Sigmoid colon (tissue), 7 donors: ENCODE measurements at regions of chr17 and their contacts with region 1.

Region 1: GRCh38 chr17:49677933-49678847 is at the start of gene SPOP:
- DNase-seq: peak; percentile 100
- H3K4me3 ChIP-seq: peak within 1 kb of the TSS; percentile 68 to 77 (median 74)
- H3K27ac ChIP-seq: peak within 1 kb of the TSS; percentile 96 to 99 (median 98)
- H3K4me1 ChIP-seq: peaks cover 0 to 41% (median 31%) of the 10 kb centered on the region in 4 donors
- H3K27me3 ChIP-seq: no peaks in the 10 kb centered on the region
- CTCF ChIP-seq: no peak
- EP300 ChIP-seq: peak in 1 of 4 donors; percentile 26
- POLR2A ChIP-seq: peak; percentile 5 to 16
- total RNA-seq, gene SPOP: 226 to 332 (median 280) TPM

Region 2: GRCh38 chr17:49575579-49576087 is 102.6 kb before region 1 on chr17 and contains the start of gene NXPH3:
- intact Hi-C with region 1: loop called (anchors 5 kb)
- DNase-seq: peak; percentile 89
- H3K4me3 ChIP-seq: peak within 1 kb of the TSS; percentile 81 to 85 (median 84)
- H3K27ac ChIP-seq: peak within 1 kb of the TSS; percentile 85 to 96 (median 90)
- H3K4me1 ChIP-seq: peaks cover 0 to 53% (median 49%) of the 10 kb centered on the region in 4 donors
- H3K27me3 ChIP-seq: no peaks in the 10 kb centered on the region
- CTCF ChIP-seq: peak in 1 of 4 experiments; percentile 62
- EP300 ChIP-seq: no peak
- POLR2A ChIP-seq: no peak
- total RNA-seq, gene NXPH3: 20.2 to 32.6 (median 21.9) TPM

Region 3: GRCh38 chr17:49610883-49611531 is 67.2 kb before region 1 on chr17:
- intact Hi-C with region 1: loop called (anchors 5 kb)
- DNase-seq: no peak
- H3K4me3 ChIP-seq: no peak overlapping the region
- H3K27ac ChIP-seq: peak overlapping the region; percentile 47 to 89 (median 66)
- H3K4me1 ChIP-seq: peaks cover 0 to 58% (median 46%) of the 10 kb centered on the region in 4 donors
- H3K27me3 ChIP-seq: no peaks in the 10 kb centered on the region
- CTCF ChIP-seq: no peak
- EP300 ChIP-seq: no peak
- POLR2A ChIP-seq: no peak

Region 4: DNA sequence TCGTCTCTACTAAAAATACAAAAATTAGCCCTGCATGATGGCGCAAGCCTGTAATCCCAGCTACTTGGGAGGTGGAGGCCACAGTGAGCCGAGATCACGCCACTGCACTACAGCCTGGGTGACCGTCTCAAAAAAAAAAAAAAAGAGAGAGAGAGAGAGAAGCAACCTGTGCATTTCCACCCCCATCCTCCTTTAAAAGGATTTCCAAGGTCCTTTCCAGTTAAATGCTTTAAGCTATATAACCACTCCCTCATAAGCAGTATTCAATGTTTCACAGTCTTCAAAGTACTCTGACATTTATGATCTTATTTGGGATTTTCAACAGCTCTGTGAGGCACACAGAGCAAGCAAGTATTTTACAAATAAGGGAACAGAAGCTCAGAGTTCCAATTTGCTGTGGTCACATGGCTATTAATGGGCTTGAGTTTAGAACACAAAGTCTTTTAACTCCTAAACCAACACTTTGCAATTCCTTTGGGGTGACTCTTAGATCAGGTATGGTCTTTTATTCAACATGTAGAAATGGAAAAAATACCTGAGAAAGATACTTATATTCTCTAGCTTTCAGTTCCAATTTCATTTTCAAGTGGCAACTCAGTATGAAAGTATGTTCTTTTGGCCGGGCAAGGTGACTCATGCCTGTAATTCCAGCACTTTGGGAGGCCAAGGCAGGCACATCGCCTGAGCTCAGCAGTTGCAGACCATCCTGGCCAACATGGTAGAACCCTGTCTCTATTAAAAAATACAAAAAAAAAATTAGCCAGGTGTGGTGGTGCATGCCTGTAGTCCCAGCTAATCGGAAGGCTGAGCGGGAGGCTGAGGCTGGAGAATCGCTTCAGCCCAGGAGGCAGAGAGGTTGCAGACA is 31.6 kb before region 1 on chr17:
- intact Hi-C with region 1: loop called (anchors 2 kb)
- DNase-seq: peak; percentile 77
- H3K4me3 ChIP-seq: peak overlapping the region; percentile 24 to 53 (median 48)
- H3K27ac ChIP-seq: peak overlapping the region; percentile 85 to 93 (median 90)
- H3K4me1 ChIP-seq: peaks cover 0 to 51% (median 38%) of the 10 kb centered on the region in 4 donors
- H3K27me3 ChIP-seq: no peaks in the 10 kb centered on the region
- CTCF ChIP-seq: no peak
- EP300 ChIP-seq: peak; percentile 40 to 97 (median 88)
- POLR2A ChIP-seq: peak; percentile 68 to 70